Activated CD4-positive, alpha-beta memory T cell treated with anti-CD3 and anti-CD28 coated beads, Interleukin-2, amount 10 ng/mL, durations not matched to agents 7 days and 5 days (primary cell): ENCODE measurements at regions of chr7 and their contacts with region 1.

Region 1: DNA sequence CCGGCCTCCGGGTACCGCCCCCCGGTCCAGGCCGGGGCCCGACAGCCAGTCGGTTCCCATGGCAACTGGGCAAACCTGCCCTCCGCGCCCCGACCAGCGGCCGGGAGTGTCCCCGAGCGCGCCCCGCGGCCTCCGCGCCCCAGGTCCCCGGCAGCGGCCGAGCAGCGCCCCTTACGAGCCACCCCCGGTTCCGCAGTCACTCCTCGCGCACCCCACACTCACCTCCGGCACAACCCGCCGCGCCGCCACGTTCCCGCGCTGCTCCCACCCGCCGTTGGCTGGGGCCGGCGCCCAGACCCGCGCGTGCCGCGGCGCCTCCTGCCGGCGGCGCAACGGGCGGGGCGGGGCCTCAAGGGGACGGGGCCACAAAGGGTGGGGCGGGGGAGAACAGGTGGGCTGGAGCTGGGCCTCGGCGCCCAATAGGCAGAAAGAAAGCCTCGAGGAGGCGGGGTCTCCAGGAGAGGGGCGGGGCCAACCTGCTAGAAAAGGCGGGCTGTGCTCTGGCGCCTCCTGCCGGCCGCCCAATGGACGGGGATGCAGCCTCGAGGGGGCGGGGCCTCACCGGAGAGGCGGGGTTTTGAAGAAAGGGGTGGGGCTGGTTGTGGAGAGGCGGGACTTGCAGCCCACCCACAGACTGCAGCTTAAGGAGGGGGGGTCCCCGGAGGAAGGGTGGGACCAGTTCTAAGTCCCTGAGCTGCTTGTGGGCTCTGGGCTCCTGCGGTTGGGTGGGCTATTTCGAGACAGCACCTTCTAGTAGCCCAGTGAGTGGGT is at the start of gene RADIL:
- DNase-seq: peak; percentile 87
- H3K4me3 Mint-ChIP-seq: peak within 1 kb of the TSS; percentile 24
- H3K27ac Mint-ChIP-seq: no peak within 1 kb of the TSS
- H3K4me1 Mint-ChIP-seq: peaks cover 8% of the 10 kb centered on the region
- H3K27me3 Mint-ChIP-seq: peaks cover 23% of the 10 kb centered on the region
- total RNA-seq, gene RADIL: 0.05 TPM in 1 of 2 experiments, not detected in the other

Region 2: GRCh38 chr7:4797858-4798705 is 85.5 kb before region 1 on chr7:
- CTCF ChIA-PET with region 1: interaction called, 12 read pairs
- POLR2A ChIA-PET with region 1: no interaction called
- DNase-seq: peak; percentile 64
- H3K4me3 Mint-ChIP-seq: no peak overlapping the region
- H3K27ac Mint-ChIP-seq: no peak overlapping the region
- H3K4me1 Mint-ChIP-seq: no peaks in the 10 kb centered on the region
- H3K27me3 Mint-ChIP-seq: no peaks in the 10 kb centered on the region

Region 3: GRCh38 chr7:4830176-4830575 is 53.4 kb before region 1 on chr7:
- CTCF ChIA-PET with region 1: interaction called, 12 read pairs
- POLR2A ChIA-PET with region 1: no interaction called
- DNase-seq: peak; percentile 51
- H3K4me3 Mint-ChIP-seq: no peak overlapping the region
- H3K27ac Mint-ChIP-seq: no peak overlapping the region
- H3K4me1 Mint-ChIP-seq: peaks cover 1% of the 10 kb centered on the region
- H3K27me3 Mint-ChIP-seq: peaks cover 5% of the 10 kb centered on the region

Region 4: GRCh38 chr7:4958477-4959301 is 75.1 kb after region 1 on chr7 and contains the start of gene MMD2:
- CTCF ChIA-PET with region 1: no interaction called
- POLR2A ChIA-PET with region 1: no interaction called
- DNase-seq: no peak
- H3K4me3 Mint-ChIP-seq: no peak within 1 kb of the TSS
- H3K27ac Mint-ChIP-seq: no peak within 1 kb of the TSS
- H3K4me1 Mint-ChIP-seq: peaks cover 3% of the 10 kb centered on the region
- H3K27me3 Mint-ChIP-seq: peaks cover 16% of the 10 kb centered on the region
- total RNA-seq, gene MMD2: not detected